GM10248 (cell line): ENCODE measurements at regions of chr5 and their contacts with region 1.

Region 1: DNA sequence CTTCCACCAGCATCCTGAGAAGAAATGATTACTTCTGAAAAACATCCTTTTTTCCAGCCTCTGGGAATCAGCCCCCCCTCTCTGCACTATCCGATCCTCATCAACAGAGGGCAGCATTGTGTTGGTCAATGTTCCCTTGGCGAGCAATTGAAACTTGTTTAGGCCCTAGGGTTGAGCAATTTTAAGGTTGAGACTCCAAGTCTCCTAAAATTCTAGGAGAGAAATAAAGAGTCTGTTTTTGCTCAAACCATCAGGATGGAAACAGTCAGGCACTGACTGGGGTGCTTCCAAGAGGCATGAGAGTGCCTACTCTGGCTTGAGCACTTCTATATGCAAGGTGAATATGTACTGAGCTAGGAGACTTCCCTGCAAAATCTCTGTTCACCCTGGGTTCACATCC is 12.4 kb upstream of the CYFIP2 start:
- DNase-seq: peak; percentile 59
- CTCF ChIP-seq: peak; percentile 94

Region 2: DNA sequence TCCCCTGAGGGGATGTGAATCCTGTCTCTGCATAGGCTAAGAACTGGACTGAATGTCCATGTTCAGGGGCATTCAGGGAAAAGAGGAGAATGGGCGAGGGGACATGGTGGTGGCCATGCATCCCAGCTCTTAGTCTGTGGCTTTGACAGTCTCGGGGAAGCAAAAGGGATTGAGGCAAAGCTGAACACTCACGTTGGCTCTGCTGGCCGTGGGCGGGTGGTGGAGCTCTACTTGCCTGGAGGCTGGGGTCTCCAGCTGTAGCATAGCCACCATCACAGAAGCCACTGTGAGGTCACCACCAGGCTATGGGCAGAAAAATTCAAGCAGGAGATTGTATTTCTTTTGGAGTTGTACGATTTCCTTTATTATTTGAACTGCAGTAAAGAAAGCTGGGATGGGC is 91.6 kb before region 1 on chr5:
- CTCF ChIA-PET with region 1: interaction called, 10 read pairs
- POLR2A ChIA-PET with region 1: no interaction called
- DNase-seq: no peak
- CTCF ChIP-seq: no peak

Region 3: GRCh38 chr5:157214861-157215513 is 38.6 kb before region 1 on chr5:
- CTCF ChIA-PET with region 1: interaction called, 16 read pairs
- POLR2A ChIA-PET with region 1: no interaction called
- DNase-seq: no peak
- CTCF ChIP-seq: no peak

Region 4: GRCh38 chr5:157271740-157272271 is 18.3 kb after region 1 on chr5:
- CTCF ChIA-PET with region 1: interaction called, 101 read pairs
- POLR2A ChIA-PET with region 1: interaction called, 5 read pairs
- DNase-seq: peak; percentile 74
- CTCF ChIP-seq: no peak

Region 5: DNA sequence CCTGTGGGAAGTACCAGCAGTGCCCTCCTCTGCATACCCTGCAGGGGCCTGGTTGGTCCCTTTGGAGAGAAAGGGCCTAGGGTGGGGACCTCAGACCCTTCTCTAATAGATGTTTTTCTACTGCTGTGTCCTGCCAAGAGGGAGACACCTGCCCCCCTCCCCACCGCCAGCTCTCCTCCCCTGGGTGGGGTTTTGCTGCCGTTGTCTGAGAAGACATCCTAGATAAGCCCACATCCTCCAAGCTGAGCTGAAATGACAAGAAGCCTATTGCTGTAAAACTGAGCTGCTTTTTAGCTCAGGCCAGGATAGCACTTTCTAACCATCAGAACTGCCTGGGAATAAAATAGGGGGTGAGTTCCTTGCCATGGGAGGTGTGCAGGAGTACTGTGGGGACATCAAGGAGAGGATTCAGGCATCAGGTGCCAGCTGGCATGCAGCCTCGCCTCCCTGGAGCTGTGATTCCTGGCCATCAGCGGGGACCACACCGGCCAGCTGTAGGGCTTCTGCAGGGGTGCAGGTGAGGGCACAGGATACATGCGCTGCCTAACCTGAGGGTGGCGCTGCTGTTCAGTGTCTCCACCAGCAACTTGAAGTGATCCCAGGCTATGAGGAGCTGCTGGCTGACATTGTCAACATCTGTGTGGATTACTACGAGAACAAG is 50.2 kb after region 1 on chr5:
- CTCF ChIA-PET with region 1: interaction called, 33 read pairs
- POLR2A ChIA-PET with region 1: no interaction called
- DNase-seq: no peak
- CTCF ChIP-seq: peak; percentile 24

Region 6: GRCh38 chr5:157328277-157328912 is 74.8 kb after region 1 on chr5:
- CTCF ChIA-PET with region 1: interaction called, 37 read pairs
- POLR2A ChIA-PET with region 1: no interaction called
- DNase-seq: peak; percentile 80
- CTCF ChIP-seq: peak; percentile 93

Region 7: GRCh38 chr5:157476702-157477408 is 223.3 kb after region 1 on chr5:
- CTCF ChIA-PET with region 1: interaction called, 13 read pairs
- POLR2A ChIA-PET with region 1: no interaction called
- DNase-seq: peak; percentile 72
- CTCF ChIP-seq: peak; percentile 75